ENCODE measurements at regions of chr1 and their contacts with region 1.

Region 1: DNA sequence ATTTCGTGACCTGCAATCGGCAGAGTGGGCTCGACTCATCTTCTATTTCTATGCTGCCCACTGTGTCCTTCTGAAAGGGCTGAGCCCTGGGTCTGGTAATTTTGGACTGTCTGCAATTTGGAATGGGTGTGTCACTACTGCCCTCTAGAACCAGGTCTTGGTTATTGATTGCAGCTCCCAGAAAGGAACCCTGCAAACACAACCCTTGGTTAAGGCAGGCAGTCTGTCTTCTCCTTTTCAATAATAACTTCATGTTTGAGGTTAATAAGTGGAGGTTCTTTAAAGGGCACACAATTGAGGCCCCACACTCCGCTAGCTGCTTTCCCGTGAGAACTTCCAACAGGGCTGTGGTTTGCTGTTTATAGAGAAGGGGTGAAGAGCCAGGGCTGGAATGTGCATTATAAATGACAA is 79.9 kb upstream of the LYST start:
- DNase-seq: no peak
- ATAC-seq: peak; percentile 10 to 13
- H3K4me3 ChIP-seq: no peak overlapping the region
- H3K27ac ChIP-seq: no peak overlapping the region
- H3K4me1 ChIP-seq: no peaks in the 10 kb centered on the region
- H3K27me3 ChIP-seq: no peaks in the 10 kb centered on the region

Region 2: DNA sequence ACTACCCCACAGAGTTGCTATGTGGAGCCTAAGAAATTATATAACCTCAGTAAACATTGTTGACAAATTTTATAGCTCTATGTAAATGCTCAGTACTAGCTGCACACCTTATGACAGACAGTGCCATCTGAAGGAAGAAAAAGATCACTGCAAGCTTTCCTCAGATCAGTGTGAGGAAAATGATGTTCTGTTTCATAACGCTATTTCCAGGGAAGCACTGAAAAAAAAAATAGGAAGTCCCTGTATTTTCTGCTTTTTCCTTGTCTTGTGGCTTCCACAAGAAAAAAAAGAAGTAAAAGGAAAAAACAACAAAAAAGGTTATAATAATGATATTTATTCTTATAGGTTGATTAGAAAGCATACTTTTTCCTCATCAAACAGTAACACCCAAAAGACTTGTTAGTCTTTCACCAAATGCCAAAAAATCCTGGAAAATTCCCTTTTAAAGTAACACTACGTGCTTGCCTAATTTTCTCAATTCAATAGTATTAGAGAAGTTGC is 103.1 kb before region 1 on chr1:
- intact Hi-C with region 1: loop called in 1 of 4 experiments (anchors 10 kb)
- DNase-seq: no peak
- ATAC-seq: peak; percentile 63 to 73
- H3K4me3 ChIP-seq: no peak overlapping the region
- H3K27ac ChIP-seq: no peak overlapping the region
- H3K4me1 ChIP-seq: peaks cover 10% of the 10 kb centered on the region
- H3K27me3 ChIP-seq: no peaks in the 10 kb centered on the region

Region 3: GRCh38 chr1:235908742-235909520 is 37.6 kb before region 1 on chr1:
- intact Hi-C with region 1: loop called in 1 of 4 experiments (anchors 5 kb)
- DNase-seq: no peak
- ATAC-seq: peak; percentile 35 to 63
- H3K4me3 ChIP-seq: no peak overlapping the region
- H3K27ac ChIP-seq: peak overlapping the region; percentile 38
- H3K4me1 ChIP-seq: peaks cover 2% of the 10 kb centered on the region
- H3K27me3 ChIP-seq: no peaks in the 10 kb centered on the region